Activated CD4-positive, alpha-beta T cell treated with anti-CD3 and anti-CD28 coated beads, Interleukin-2, amount 10 ng/mL, durations not matched to agents 24 days and 14 days (primary cell): ENCODE measurements at regions of chr17 and their contacts with region 1.

Region 1: DNA sequence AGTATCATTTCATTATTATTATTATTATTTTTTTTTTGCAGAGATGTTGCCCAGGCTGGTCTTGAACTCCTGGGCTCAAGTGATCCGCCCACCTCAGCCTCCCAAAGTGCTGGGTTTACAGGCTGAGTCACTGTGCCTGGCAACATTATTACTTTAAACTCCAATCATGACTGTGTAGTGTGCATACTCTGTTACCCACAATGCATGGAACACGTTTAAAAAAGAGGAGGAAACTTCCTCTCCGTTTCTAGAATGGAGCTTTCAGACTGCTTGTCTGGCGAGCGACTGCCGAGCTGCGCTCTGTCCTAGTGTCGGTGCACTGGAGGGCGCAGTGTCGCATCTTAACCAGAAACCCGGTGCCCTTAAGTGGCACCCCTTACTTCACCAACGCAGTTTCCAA is 22.1 kb upstream of the FASN start:
- DNase-seq: peak; percentile 78
- H3K4me3 Mint-ChIP-seq: no peak overlapping the region
- H3K27ac Mint-ChIP-seq: peak overlapping the region; percentile 45
- H3K4me1 Mint-ChIP-seq: peaks cover 24% of the 10 kb centered on the region
- H3K27me3 Mint-ChIP-seq: no peaks in the 10 kb centered on the region

Region 2: DNA sequence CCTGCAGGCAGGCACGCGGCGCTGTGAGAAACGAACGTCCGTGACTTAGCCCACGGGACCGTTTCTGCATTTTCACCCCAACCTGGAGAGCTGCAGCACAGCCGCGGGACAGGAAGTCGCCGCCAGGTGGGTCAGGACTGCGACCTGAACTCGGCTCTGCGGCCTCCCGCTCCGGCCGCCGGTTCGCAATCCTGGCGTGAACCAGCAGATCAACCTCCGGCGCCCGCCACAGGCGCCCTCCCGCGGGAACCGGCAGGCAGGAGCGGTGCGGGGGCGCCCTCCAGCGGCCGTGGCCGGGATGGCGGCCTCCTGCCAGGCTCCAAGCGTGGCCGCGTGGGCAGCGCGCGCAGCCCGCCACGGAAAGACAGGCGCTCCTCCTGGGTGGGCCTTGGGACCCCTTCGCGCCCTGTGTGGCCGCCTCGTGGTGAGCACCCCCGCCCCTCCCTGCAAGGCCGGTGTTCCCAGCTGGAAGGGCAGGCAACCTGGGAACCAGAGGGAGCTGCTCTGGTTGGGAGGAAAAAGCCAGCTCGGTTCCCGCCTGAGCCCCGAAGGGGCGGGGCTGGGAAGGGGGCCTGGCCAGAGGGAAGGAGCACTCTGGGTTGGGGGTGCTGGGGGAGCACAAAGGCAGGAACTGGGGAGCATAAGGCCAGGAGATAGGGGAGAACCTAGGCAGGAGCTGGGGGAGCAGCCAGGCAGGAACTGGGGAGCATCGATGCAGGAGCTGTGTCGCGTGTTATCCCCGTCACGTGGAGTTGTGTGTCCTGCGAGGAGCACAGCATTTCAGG is 635.8 kb before region 1 on chr17:
- intact Hi-C with region 1: no loop called
- DNase-seq: peak; percentile 97
- H3K4me3 Mint-ChIP-seq: peak overlapping the region; percentile 37
- H3K27ac Mint-ChIP-seq: no peak overlapping the region
- H3K4me1 Mint-ChIP-seq: peaks cover 14% of the 10 kb centered on the region
- H3K27me3 Mint-ChIP-seq: peaks cover 29% of the 10 kb centered on the region

Region 3: GRCh38 chr17:82370471-82371332 is 250.6 kb after region 1 on chr17:
- intact Hi-C with region 1: loop called (anchors 10 kb)
- DNase-seq: peak; percentile 79
- H3K4me3 Mint-ChIP-seq: peak overlapping the region; percentile 74
- H3K27ac Mint-ChIP-seq: no peak overlapping the region
- H3K4me1 Mint-ChIP-seq: peaks cover 17% of the 10 kb centered on the region
- H3K27me3 Mint-ChIP-seq: peaks cover 41% of the 10 kb centered on the region